Activated naive CD8-positive, alpha-beta T cell treated with anti-CD3 and anti-CD28 coated beads, Interleukin-2, amount 10 ng/mL, durations not matched to agents 7 days and 5 days (primary cell): ENCODE measurements at regions of chr7 and their contacts with region 1.

Region 1: DNA sequence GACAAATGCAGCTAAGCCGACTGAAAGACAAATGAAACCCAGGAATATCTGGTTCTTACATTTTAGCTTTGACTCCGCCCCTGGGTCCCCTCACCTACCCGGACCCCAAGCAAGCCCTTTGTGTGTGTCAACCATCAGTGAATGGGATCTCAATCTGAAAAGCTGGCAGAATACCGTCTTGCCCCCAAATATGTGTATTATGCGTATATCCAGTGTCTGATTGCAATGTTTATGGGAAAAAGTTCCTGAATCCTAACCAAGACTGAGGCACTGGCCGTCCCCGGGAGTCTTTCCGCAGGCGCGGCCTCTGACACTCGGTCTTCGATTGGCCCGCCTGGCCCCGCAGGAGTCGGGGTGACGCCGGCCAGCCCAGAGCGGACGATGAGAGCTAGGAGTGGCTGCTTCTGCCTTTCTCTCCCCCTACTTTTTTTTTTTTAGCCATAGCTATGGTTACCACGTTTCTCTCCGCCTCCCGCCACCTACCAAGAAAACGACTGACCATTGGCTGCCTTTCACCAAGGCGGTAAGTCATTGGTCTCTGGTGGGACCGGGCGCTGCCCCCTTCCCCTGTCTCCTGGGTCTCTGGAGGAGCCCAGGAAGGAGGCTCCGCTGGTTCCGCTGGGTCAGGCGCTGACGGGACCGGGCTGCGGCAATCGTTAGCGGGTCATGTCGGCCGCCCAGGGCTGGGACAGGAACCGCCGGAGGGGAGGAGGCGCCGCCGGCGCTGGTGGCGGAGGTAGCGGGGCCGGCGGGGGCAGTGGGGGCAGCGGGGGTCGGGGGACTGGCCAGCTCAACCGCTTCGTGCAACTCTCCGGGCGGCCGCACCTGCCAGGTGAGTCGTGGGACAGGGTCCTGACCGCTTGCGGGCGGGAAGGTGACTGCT is at the start of gene KLHDC10:
- DNase-seq: peak; percentile 89
- ATAC-seq: peak; percentile 95
- H3K4me3 Mint-ChIP-seq: peak within 1 kb of the TSS; percentile 95
- H3K27ac Mint-ChIP-seq: peak within 1 kb of the TSS; percentile 96
- H3K4me1 Mint-ChIP-seq: peaks cover 21% of the 10 kb centered on the region
- H3K27me3 Mint-ChIP-seq: peaks cover 2% of the 10 kb centered on the region
- total RNA-seq, gene KLHDC10: 15.6 to 15.7 TPM

Region 2: GRCh38 chr7:130205084-130205947 is 135.1 kb after region 1 on chr7 and contains the start of gene TMEM209:
- POLR2A ChIA-PET with region 1: interaction called, 19 read pairs
- DNase-seq: peak; percentile 89
- ATAC-seq: peak; percentile 97
- H3K4me3 Mint-ChIP-seq: peak within 1 kb of the TSS; percentile 96
- H3K27ac Mint-ChIP-seq: peak within 1 kb of the TSS; percentile 97
- H3K4me1 Mint-ChIP-seq: peaks cover 10% of the 10 kb centered on the region
- H3K27me3 Mint-ChIP-seq: no peaks in the 10 kb centered on the region
- total RNA-seq, gene TMEM209: 39.5 to 43.9 TPM

Region 3: DNA sequence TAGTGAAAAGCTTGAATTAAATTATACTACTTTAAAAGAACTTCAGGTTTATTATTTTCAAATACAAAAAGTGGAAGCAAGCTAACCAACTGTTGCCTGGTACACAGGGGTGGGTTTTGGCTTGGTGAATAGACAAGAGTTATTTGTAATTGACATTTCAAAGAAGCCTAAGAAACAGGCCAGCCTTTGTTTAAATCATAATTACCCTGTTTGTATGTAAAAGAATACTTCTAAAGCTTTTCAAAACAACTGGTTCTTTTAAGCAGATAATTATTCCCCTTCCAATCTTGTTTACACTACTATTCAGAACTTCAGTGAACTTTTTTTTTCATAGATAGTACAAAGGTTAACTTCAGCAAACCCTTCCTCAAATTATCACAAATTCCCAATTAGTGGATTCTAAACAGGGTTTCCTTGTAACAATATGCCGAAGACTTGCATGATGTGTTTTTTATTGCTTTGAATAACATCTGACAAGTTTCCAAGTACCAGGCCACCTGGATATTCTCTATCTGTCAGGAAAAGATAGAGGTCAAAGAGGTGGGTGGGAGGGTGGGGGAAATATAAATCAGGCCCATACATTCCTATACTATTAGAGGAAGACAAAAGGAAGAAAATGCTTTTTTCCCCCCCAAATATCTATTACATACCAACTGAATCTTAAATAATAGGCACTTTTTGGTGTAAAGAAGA is 157.8 kb after region 1 on chr7:
- POLR2A ChIA-PET with region 1: no interaction called
- DNase-seq: no peak
- ATAC-seq: no peak
- H3K4me3 Mint-ChIP-seq: no peak overlapping the region
- H3K27ac Mint-ChIP-seq: no peak overlapping the region
- H3K4me1 Mint-ChIP-seq: peaks cover 6% of the 10 kb centered on the region
- H3K27me3 Mint-ChIP-seq: peaks cover 3% of the 10 kb centered on the region